T-cell (primary cell): ENCODE measurements at regions of chr9 and their contacts with region 1.

Region 1: GRCh38 chr9:132169672-132170392 is 8.0 kb downstream of the NTNG2 start:
- DNase-seq: peak in 31 of 35 experiments; percentile 20 to 76 (median 39)
- ATAC-seq: peak; percentile 38 to 71 (median 52)
- H3K4me3 ChIP-seq: no peak overlapping the region
- H3K4me3 Mint-ChIP-seq: no peak overlapping the region
- H3K27ac ChIP-seq: no peak overlapping the region
- H3K27ac Mint-ChIP-seq: no peak overlapping the region
- H3K4me1 ChIP-seq: peaks cover 0 to 5% of the 10 kb centered on the region in 2 experiments
- H3K4me1 Mint-ChIP-seq: peaks cover 0 to under 1% (median under 1%) of the 10 kb centered on the region in 3 donors
- H3K27me3 ChIP-seq: peaks cover 8 to 52% of the 10 kb centered on the region in 2 experiments
- H3K27me3 Mint-ChIP-seq: peaks cover 42% of the 10 kb centered on the region in 2 donors

Region 2: DNA sequence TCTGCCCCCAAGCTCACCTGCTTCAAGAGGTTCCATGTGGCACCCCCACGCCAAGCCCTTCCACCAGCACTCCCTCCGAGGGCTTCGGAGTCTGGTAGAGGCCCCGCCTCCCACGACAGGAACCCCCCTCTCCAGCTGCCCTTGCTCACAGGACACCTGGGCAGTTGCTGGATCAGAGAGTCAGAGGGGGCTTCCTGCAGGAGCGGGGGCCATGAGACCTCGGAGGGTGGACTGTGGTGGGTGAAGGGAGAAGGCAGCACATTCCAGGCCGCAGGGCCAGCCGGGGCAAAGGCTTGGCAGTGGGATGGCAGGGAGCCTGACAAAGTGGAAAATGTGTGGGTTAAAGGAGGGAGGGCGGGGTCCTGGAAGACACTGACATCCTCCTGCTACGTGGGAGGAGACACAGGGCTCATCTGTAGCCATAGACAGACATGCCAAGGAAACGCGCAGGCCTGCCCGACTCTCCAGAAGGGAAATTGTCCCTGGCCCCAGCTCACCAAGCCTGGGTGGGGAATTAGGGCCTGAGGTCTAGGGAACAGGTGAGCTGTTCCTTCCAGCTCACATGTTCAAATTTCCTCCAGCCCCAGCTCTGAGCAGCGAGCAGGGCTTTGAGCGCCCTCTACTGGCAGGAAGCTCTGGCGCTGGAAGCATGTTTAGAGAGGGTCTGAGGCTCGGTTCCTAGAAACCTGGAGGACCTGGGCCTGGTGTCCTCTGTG is 66.3 kb after region 1 on chr9:
- CTCF ChIA-PET with region 1: interaction called, 3 to 16 read pairs
- POLR2A ChIA-PET with region 1: no interaction called
- DNase-seq: peak; percentile 39 to 88 (median 71)
- ATAC-seq: no peak
- H3K4me3 ChIP-seq: no peak overlapping the region
- H3K4me3 Mint-ChIP-seq: no peak overlapping the region
- H3K27ac ChIP-seq: no peak overlapping the region
- H3K27ac Mint-ChIP-seq: no peak overlapping the region
- H3K4me1 ChIP-seq: peaks cover 0 to 22% of the 10 kb centered on the region in 2 experiments
- H3K4me1 Mint-ChIP-seq: peaks cover 1 to 11% (median 7%) of the 10 kb centered on the region in 3 donors
- H3K27me3 ChIP-seq: peaks cover 0 to 29% of the 10 kb centered on the region in 2 experiments
- H3K27me3 Mint-ChIP-seq: peaks cover 0 to 3% of the 10 kb centered on the region in 2 donors

Region 3: DNA sequence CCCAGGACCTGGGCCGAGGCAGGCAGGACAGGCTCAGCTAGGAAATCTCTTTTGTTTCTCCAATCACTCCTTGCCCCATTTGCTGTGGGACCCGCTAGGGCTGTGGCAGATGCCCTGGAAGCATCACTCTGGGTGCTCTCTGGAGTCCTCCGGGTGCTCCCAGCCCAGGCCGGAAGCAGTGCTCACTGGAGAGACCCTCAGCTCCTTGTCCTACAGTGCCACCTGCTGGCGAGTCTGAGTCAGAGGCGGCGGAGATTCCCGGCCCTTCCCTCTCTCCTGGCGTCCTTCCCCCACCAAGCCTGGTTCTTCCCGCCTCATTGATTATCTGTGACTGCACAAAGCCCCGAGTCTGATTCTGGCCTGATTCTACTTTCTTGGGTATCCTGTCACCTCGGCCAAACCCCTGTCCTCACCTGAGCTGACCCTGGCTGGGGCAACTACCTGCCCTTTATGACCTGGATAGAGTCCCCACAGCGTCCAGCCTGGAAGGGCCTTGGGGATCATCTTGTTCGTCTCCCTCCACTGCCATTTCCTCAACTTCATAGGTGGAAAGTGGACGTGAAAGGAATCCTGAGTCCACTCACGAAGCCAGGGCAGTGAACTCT is 405.3 kb after region 1 on chr9:
- CTCF ChIA-PET with region 1: no interaction called
- POLR2A ChIA-PET with region 1: no interaction called
- DNase-seq: peak in 23 of 35 experiments; percentile 5 to 64 (median 30)
- ATAC-seq: peak in 1 of 4 experiments; percentile 67
- H3K4me3 ChIP-seq: no peak overlapping the region
- H3K4me3 Mint-ChIP-seq: no peak overlapping the region
- H3K27ac ChIP-seq: no peak overlapping the region
- H3K27ac Mint-ChIP-seq: no peak overlapping the region
- H3K4me1 ChIP-seq: no peaks in the 10 kb centered on the region
- H3K4me1 Mint-ChIP-seq: peaks cover 0 to 3% (median 0%) of the 10 kb centered on the region in 3 donors
- H3K27me3 ChIP-seq: peaks cover 4 to 82% of the 10 kb centered on the region in 2 experiments
- H3K27me3 Mint-ChIP-seq: peaks cover 45 to 72% of the 10 kb centered on the region in 2 donors